ENCODE measurements at regions of chr17 and their contacts with region 1.

Region 1: GRCh38 chr17:7329374-7329996 is 350 bp upstream of the NEURL4 start:
- DNase-seq: peak; percentile 95
- CTCF ChIP-seq: no peak

Region 2: DNA sequence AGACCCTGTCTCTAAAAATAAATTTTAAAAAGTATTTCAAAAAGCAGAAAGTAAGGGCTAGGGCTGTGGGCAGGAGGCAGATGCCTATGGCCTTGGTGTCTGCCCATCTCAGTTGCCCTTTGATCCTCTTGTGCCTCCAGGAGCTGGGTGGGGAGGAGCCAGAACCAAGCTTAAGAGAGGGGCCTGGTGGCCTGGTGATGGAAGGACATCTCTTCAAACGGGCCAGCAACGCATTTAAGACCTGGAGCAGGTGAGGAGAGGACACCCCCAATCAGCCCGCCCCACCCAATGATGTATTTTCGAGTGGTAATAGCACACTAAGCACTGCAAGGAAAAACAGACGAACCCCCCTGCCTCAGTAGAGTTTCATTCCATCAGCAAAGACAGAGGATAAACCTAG is 14.9 kb after region 1 on chr17:
- CTCF ChIA-PET with region 1: interaction called, 62 read pairs
- POLR2A ChIA-PET with region 1: interaction called, 4 read pairs
- DNase-seq: no peak
- CTCF ChIP-seq: no peak

Region 3: DNA sequence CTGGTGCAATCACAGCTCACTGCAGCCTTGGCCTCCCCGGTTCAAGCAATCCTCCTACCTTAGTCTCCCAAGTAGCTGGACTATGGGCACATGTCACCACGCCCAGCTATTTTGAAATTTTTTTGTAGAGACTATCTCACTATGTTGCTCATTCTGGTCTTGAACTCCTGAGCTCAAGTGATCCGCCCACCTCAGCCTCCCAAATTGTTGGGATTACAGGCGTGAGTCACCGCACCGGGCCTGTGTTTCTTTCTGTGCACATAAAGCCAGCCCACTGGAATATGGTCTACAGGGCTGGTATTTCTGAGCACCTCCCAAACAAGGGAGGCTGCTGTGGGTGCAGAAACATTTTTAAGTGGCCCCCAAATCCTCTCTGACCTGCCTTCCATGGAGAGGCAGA is 33.8 kb after region 1 on chr17:
- CTCF ChIA-PET with region 1: no interaction called
- POLR2A ChIA-PET with region 1: interaction called, 12 read pairs
- DNase-seq: no peak
- CTCF ChIP-seq: no peak